Ascending aorta (tissue), 2 donors: ENCODE measurements at regions of chr11 and their contacts with region 1.

Region 1: GRCh38 chr11:68447015-68447801 is 13.3 kb upstream of the PPP6R3 start:
- DNase-seq: peak in 1 of 2 donors; percentile 86
- H3K4me3 ChIP-seq: no peak overlapping the region
- H3K27ac ChIP-seq: no peak overlapping the region
- H3K4me1 ChIP-seq: no peaks in the 10 kb centered on the region
- H3K27me3 ChIP-seq: no peaks in the 10 kb centered on the region
- CTCF ChIP-seq: peak; percentile 89 to 91 (median 90)

Region 2: DNA sequence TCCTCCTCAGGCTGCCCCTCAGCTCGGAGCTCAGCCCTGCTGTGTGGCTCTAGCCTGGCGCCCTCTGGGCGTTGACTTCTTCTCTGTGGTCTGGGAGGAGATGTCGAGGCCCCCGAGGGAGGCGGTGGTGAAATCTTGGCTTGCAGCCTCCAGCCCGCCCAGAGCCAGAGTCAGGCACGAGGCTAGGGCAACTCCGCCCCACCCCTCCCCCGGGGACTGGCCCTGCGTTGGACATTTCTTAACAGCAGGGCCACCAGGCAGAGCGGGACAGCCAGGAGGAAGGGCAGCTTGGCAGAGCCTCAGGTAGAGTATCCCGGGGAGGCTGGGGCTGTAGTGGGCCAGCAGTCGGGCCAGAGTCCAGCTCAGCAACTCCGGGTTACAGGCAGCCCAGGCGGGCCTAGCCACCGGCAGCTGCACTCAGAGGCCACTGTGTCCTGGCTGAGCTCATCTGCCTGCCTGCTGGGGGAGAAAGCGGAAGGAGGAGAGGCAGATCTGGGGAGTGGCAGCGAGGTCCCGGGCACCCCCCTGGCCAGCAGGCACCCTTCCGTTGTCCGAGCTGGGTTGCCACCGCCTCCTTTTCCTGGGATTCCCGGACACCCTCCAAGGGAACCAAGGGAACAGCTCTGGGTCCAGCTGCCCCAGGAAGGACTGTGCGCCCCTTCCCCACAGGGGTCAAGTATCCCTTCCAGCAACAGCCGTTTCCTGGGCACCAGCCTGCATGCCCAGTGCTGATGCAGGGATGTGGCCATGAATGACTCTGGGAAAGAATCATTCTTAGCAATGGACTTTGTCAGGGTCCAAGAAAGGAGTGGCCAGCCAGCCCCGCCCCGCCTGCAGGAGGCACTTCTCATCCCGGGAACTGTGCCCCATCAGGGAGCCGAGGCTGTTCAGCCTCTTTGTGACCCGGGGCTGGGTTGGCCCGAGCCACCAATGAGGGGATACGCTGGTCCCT is 436.8 kb before region 1 on chr11 and contains the start of gene ALDH3B1:
- intact Hi-C with region 1: loop called (anchors 10 kb)
- DNase-seq: peak; percentile 74 to 97
- H3K4me3 ChIP-seq: peak within 1 kb of the TSS; percentile 35 to 60
- H3K27ac ChIP-seq: peak within 1 kb of the TSS; percentile 82 to 91
- H3K4me1 ChIP-seq: peaks cover 9 to 32% of the 10 kb centered on the region in 2 donors
- H3K27me3 ChIP-seq: no peaks in the 10 kb centered on the region
- CTCF ChIP-seq: no peak
- total RNA-seq, gene ALDH3B1: 42.8 TPM

Region 3: GRCh38 chr11:68257475-68258362 is 189.5 kb before region 1 on chr11:
- intact Hi-C with region 1: loop called (anchors 1 kb)
- DNase-seq: peak; percentile 75 to 98
- H3K4me3 ChIP-seq: peak overlapping the region in 1 of 2 donors; percentile 51
- H3K27ac ChIP-seq: peak overlapping the region; percentile 10 to 37
- H3K4me1 ChIP-seq: peaks cover 0 to 3% of the 10 kb centered on the region in 2 donors
- H3K27me3 ChIP-seq: no peaks in the 10 kb centered on the region
- CTCF ChIP-seq: peak; percentile 75 to 94 (median 90)

Region 4: DNA sequence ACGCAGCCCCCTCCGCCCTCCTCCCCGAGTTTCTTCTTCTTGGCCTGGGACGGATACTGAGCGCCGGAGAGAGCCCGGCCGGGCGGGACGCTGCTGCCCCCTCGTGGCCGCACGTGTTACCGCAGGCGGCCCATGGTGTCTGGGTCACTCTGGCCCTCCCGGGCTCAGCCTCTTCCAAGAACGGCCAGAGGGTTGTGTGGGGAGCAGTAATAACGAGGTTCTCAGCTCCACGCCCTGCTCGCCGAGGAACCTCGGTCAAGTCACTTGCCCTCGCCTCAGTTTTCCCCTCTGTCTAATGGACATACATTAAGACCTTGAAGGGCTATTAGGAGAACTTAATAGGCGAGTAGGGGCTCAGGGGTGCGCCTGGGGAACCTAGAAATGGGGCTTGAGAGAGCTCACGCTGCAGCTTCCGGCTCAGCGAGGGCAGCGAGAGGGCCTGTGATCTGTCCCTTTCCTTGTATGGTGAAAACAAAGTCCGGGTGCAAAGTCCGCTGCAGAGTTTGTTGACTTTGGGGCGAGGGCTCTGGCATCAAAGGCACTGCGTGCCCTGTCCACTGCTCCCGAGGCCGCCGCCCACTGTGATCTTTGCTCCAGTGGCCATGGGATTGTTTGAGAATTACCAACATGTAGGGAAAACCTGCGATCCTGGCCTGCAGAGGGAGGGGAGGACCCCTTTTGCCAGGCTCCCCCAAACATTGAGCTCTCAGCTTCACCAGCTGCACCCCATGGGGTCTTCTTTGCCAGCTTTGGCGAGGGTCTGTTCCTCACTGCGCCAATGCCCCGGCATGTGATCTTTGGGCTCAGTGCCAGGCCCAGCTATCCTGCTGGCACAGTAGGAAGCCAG is 149.2 kb before region 1 on chr11:
- intact Hi-C with region 1: loop called (anchors 2 kb)
- DNase-seq: peak in 1 of 2 donors; percentile 86
- H3K4me3 ChIP-seq: peak overlapping the region in 1 of 2 donors; percentile 12
- H3K27ac ChIP-seq: no peak overlapping the region
- H3K4me1 ChIP-seq: peaks cover 0 to 7% of the 10 kb centered on the region in 2 donors
- H3K27me3 ChIP-seq: no peaks in the 10 kb centered on the region
- CTCF ChIP-seq: peak; percentile 96 to 100 (median 99)